A673 (cell line): ENCODE measurements at regions of chr16 and their contacts with region 1.

Region 1: DNA sequence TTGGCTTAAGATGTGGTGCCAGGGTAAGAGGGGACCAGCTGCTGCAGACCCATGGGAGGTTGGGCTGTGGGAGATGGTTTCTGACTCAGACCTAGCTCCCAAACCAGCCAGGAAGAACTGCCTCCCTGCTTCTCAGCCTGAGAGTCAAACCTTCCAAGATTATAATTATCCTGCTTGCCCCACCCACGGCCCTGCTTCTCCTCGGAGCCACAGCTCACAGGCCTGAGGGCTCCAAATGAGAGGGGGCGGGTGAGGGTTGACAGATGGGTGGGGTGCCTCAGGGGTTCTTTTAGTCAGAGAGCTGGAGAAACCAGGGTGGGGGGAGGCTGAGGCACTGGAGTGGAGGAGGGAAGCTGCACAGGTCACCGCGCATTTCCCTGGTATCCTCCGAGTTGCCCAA is 28.7 kb upstream of the GRIN2A start:
- DNase-seq: no peak
- H3K4me3 ChIP-seq: no peak overlapping the region
- H3K27ac ChIP-seq: no peak overlapping the region
- H3K4me1 ChIP-seq: no peaks in the 10 kb centered on the region
- H3K27me3 ChIP-seq: peaks cover 2% of the 10 kb centered on the region
- CTCF ChIP-seq: no peak

Region 2: DNA sequence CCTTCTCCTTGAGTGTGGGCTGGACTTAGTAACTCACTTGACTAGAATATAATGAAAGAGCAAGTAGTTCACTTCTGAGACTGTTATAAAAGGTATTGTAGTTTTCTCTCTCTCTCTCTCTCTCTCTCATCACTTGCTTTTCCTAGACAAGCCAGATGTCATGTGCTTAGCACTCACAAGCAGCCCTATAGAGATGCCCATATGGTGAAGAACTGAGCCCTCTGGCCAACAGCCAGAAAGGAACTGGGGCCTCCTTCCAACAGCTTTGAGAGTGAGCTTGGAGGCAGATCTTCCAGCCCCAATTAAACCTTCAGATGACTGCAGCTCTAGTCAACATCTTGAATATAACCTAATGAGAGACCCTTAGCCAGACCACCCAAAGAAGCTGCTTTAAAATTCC is 469.2 kb before region 1 on chr16:
- CTCF ChIA-PET with region 1: no interaction called
- POLR2A ChIA-PET with region 1: no interaction called
- intact Hi-C with region 1: no loop called
- DNase-seq: no peak
- H3K4me3 ChIP-seq: no peak overlapping the region
- H3K27ac ChIP-seq: no peak overlapping the region
- H3K4me1 ChIP-seq: no peaks in the 10 kb centered on the region
- H3K27me3 ChIP-seq: no peaks in the 10 kb centered on the region
- CTCF ChIP-seq: no peak

Region 3: DNA sequence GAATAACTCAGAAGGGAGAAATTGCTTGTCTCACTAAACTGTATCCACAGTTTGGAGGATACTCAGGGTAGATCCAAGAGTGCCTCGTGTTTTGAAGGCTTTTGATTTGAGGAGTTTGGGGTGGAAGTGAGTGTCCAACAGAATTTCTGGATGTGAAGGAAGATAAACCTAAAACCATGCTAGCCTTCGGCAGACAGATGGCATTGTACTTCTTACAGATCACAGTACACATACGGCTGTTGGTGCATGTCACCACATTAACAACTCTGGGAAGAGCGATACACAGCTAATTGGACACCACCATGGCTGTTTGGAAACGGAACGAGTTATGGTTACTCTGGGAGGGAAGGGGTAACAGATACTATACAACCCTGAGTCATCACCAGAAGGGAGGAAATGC is 449.1 kb before region 1 on chr16:
- CTCF ChIA-PET with region 1: no interaction called
- POLR2A ChIA-PET with region 1: interaction called, 10 read pairs
- intact Hi-C with region 1: no loop called
- DNase-seq: no peak
- H3K4me3 ChIP-seq: no peak overlapping the region
- H3K27ac ChIP-seq: no peak overlapping the region
- H3K4me1 ChIP-seq: no peaks in the 10 kb centered on the region
- H3K27me3 ChIP-seq: peaks cover 11% of the 10 kb centered on the region
- CTCF ChIP-seq: no peak